IMR-90 (cell line): ENCODE measurements at regions of chr10 and their contacts with region 1.

Region 1: DNA sequence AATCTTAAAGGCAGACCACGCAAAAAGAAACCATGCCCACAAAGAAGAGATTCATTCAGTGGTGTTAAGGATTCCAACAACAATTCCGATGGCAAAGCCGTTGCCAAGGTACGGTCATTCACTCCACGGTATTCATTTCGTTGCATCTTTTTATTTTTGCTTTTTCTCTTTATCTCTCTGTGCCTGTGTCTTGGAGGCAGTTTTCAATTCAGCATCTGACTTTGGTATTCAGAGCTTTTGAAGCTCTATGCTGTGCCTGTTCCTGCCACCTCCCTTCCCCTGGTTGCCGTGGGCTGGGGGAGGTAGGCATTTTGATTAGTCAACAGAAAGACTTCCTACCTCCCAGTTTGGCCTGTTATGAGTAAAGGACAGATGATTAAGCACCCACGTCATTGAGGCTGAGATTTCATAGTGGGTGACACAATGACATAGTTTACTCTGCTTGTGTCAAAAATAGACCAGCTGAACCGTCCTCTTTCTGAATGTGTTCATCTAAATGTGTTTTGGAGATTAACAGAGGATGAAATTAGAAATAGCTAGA is 149.5 kb downstream of the ARID5B start:
- DNase-seq: peak; percentile 96
- ATAC-seq: peak; percentile 35
- H3K4me3 ChIP-seq: peak overlapping the region; percentile 62
- H3K27ac ChIP-seq: peak overlapping the region; percentile 83
- H3K4me1 ChIP-seq: peaks cover 22% of the 10 kb centered on the region
- H3K27me3 ChIP-seq: no peaks in the 10 kb centered on the region
- CTCF ChIP-seq: no peak
- POLR2A ChIP-seq: peak; percentile 94
- RAD21 ChIP-seq: no peak

Region 2: GRCh38 chr10:60495338-60496055 is 1555.5 kb before region 1 on chr10:
- CTCF ChIA-PET with region 1: no interaction called
- POLR2A ChIA-PET with region 1: interaction called, 14 read pairs
- dilution Hi-C with region 1: no loop called
- in situ Hi-C with region 1: no loop called
- intact Hi-C with region 1: no loop called
- DNase-seq: peak; percentile 28
- ATAC-seq: no peak
- H3K4me3 ChIP-seq: no peak overlapping the region
- H3K27ac ChIP-seq: no peak overlapping the region
- H3K4me1 ChIP-seq: no peaks in the 10 kb centered on the region
- H3K27me3 ChIP-seq: no peaks in the 10 kb centered on the region; the same call in 1 of the 2 replicates
- CTCF ChIP-seq: no peak
- POLR2A ChIP-seq: no peak
- RAD21 ChIP-seq: no peak

Region 3: DNA sequence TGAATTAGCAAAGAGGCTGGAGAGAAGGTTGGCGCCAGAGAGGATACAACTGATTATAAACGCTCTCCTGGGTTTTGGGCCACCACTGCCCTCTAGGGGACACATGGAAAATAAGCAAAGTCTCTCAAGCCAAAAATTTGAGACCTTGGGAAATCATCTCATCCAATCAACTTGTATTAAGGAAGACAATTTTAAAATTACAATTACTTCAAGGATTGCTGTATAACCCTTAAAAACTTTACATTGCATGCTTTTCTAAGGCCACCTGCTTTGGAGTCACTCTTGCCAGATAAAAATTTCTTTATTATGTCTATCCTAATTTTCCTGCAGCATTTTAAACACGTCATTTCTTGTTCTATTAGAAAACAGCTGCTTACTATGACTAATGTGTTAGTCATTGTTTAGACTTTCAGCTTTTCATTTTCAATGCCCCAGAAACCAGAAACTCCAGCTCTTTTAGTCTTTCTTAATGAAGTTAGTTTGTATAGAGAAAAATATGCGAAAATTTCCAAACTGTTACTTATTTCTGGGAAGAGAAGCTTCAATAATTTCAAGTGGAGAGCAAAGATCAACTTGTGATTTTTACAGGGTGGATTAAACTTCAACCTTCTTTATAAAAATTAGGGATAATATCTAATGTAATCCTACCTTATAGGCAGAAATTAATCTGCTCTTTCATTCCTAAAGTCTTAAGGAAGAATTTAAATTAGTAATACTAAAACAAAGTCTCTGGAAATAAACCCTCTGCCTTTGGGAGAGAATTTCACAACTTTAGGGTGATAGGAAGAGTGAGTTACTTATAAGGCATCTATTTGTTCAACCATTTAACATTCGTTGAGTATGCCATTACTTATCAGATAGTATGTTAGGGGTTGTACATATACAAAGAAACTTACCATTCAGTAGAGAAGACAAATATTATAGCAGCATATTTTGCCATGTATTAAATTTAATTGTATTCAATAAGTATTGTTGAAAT is 1086.4 kb before region 1 on chr10:
- CTCF ChIA-PET with region 1: no interaction called
- POLR2A ChIA-PET with region 1: no interaction called
- dilution Hi-C with region 1: no loop called
- in situ Hi-C with region 1: no loop called
- intact Hi-C with region 1: loop called (anchors 10 kb)
- DNase-seq: peak; percentile 91
- ATAC-seq: peak; percentile 76
- H3K4me3 ChIP-seq: no peak overlapping the region
- H3K27ac ChIP-seq: peak overlapping the region; percentile 49; the same call in 1 of the 2 replicates
- H3K4me1 ChIP-seq: peaks cover 4% of the 10 kb centered on the region; the same call in 1 of the 2 replicates
- H3K27me3 ChIP-seq: no peaks in the 10 kb centered on the region
- CTCF ChIP-seq: peak; percentile 88
- POLR2A ChIP-seq: no peak
- RAD21 ChIP-seq: peak; percentile 78

Region 4: DNA sequence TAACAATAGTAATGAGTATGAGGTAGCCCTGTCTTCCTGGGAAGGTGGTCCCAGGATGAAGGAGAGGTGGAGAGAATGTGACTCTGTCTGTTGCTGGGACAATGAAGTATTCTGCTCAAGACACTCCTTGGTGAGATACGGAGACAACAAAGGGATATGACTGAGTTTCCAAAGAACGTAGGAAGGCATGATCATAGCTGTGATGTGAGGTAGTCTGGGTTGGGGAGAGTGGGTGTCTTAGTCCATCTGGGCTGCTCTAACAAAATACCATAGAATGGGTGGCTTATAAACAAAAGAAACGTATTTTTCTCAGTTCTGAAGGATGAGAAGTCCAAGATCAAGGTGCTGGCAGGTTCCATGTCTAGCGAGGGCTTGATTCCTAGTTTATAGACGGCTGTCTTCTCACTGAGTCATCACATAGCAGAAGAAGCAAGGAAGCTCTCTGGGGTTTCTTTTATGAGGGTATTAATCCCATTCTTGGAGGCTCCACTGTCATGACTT is 1022.1 kb before region 1 on chr10:
- CTCF ChIA-PET with region 1: no interaction called
- POLR2A ChIA-PET with region 1: no interaction called
- dilution Hi-C with region 1: no loop called
- in situ Hi-C with region 1: no loop called
- intact Hi-C with region 1: no loop called
- DNase-seq: peak; percentile 77
- ATAC-seq: peak; percentile 85
- H3K4me3 ChIP-seq: no peak overlapping the region
- H3K27ac ChIP-seq: no peak overlapping the region
- H3K4me1 ChIP-seq: peaks cover 2% of the 10 kb centered on the region; the same call in 1 of the 2 replicates
- H3K27me3 ChIP-seq: no peaks in the 10 kb centered on the region
- CTCF ChIP-seq: no peak
- POLR2A ChIP-seq: no peak
- RAD21 ChIP-seq: no peak

Region 5: DNA sequence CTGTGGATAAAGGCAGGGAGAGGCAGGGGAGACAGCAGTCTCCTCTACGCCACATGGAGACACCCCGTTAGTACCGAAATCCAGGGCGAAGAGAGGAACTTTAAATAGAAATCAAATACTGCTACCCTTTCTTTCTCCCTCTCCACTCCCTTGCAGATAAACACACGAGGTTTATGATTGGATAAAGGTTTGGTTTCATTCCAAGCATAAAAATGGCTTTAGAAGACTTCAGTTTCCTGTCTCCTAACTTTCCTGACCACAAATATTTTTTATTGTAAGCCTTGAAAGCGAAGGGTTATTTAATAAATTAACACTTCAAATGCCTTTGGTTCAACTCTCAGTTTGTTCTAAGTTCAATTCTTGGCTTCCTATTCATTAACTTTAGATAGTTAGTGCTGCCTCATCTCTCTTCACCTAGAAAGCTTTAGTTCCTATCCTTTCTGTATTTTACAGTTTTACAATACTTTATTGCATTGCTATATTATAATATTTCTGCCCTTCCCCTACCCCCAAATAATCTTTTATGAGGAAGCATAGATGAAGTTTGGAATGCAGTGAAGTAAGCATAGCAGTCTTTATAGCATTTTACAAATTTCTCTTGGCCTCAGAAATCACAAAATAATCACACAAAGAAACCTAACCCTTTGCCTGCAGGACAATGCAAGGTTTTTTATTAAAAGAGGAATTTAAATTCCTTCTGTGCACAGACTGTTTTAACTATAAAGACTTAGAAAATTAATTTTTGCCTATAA is 181.0 kb before region 1 on chr10:
- CTCF ChIA-PET with region 1: no interaction called
- POLR2A ChIA-PET with region 1: no interaction called
- dilution Hi-C with region 1: no loop called
- in situ Hi-C with region 1: no loop called
- intact Hi-C with region 1: no loop called
- DNase-seq: peak; percentile 73
- ATAC-seq: peak; percentile 79
- H3K4me3 ChIP-seq: peak overlapping the region; percentile 29; the same call in 1 of the 2 replicates
- H3K27ac ChIP-seq: peak overlapping the region; percentile 98
- H3K4me1 ChIP-seq: peaks cover 17% of the 10 kb centered on the region
- H3K27me3 ChIP-seq: no peaks in the 10 kb centered on the region
- CTCF ChIP-seq: no peak
- POLR2A ChIP-seq: no peak
- RAD21 ChIP-seq: no peak

Region 6: GRCh38 chr10:61882621-61883373 is 168.2 kb before region 1 on chr10:
- CTCF ChIA-PET with region 1: no interaction called
- POLR2A ChIA-PET with region 1: no interaction called
- dilution Hi-C with region 1: no loop called
- in situ Hi-C with region 1: no loop called
- intact Hi-C with region 1: no loop called
- DNase-seq: peak; percentile 58
- ATAC-seq: no peak
- H3K4me3 ChIP-seq: no peak overlapping the region
- H3K27ac ChIP-seq: no peak overlapping the region
- H3K4me1 ChIP-seq: peaks cover under 1% of the 10 kb centered on the region; the same call in 1 of the 2 replicates
- H3K27me3 ChIP-seq: no peaks in the 10 kb centered on the region
- CTCF ChIP-seq: no peak
- POLR2A ChIP-seq: no peak
- RAD21 ChIP-seq: no peak

Region 7: DNA sequence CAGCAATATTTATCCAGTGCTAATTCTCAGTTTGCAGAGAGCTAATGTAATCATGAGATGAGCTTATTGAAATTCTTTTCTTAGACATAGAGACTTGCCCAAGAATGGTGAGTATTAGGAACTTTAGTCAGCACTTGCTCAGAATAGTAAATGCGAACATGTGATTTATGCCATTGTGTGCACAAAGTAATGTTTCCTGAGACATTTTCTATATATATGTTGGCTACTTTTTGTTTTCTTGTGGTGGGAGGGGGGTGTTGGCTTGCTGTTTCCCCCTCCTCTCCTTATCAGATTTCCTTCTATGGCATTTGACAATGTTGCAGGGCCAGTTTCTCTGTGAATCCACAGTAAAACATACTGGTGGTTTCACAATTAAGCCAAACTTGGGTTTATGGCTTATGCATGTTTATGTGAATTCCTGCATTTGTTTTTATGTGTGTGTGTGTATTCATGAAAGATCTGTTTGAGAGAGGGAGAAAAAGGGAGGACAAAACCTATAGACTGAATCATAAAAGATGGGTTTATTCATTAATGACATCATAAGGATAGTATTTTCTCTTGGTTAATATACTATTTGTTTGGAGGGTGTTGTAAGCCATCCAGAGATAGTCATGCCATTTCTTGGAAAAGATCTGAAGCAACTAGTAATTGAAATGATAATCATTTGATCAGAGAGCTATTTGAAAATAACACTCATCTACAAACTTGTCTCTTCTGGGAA is 113.2 kb before region 1 on chr10:
- CTCF ChIA-PET with region 1: no interaction called
- POLR2A ChIA-PET with region 1: interaction called, 4 read pairs
- dilution Hi-C with region 1: no loop called
- in situ Hi-C with region 1: no loop called
- intact Hi-C with region 1: loop called (anchors 2 kb)
- DNase-seq: peak; percentile 68
- ATAC-seq: peak; percentile 45
- H3K4me3 ChIP-seq: no peak overlapping the region
- H3K27ac ChIP-seq: peak overlapping the region; percentile 97; the same call in 1 of the 2 replicates
- H3K4me1 ChIP-seq: peaks cover 18% of the 10 kb centered on the region
- H3K27me3 ChIP-seq: no peaks in the 10 kb centered on the region
- CTCF ChIP-seq: no peak
- POLR2A ChIP-seq: no peak
- RAD21 ChIP-seq: no peak

Region 8: DNA sequence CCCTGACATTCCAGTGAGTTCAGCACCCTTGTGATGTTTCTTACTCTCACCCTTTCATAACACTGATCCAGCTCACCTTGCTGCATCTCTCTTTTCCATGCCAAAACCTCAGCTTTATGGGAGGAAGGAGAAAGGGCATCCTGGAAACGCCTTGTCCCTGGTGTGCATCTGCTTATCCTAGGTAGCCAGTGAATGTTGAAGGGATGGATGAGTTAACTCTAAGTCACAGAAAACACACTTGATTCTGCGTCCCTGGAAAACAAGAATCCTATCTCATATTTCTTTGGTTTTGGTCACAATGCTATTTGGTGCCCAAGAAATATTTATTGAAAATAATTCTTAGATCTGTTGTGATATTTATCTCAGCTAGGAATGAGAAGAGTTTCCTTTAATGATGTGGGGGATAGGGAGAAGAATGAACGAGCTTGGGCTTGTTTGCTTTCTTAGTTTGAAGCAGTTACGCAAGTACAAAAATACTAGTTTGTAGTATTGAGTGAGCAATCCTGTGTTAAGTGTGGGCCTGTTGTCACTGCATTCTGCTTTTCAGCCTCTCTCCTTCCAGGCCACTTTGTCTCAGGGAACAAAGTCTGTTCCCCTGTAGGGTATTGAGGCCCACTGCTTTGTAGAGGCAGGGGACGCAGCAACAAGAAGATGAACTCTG is 23.0 kb before region 1 on chr10:
- CTCF ChIA-PET with region 1: no interaction called
- POLR2A ChIA-PET with region 1: interaction called, 18 read pairs
- dilution Hi-C with region 1: no loop called
- in situ Hi-C with region 1: no loop called
- intact Hi-C with region 1: no loop called
- DNase-seq: peak; percentile 57
- ATAC-seq: peak; percentile 68
- H3K4me3 ChIP-seq: no peak overlapping the region
- H3K27ac ChIP-seq: peak overlapping the region; percentile 87
- H3K4me1 ChIP-seq: peaks cover 22% of the 10 kb centered on the region
- H3K27me3 ChIP-seq: no peaks in the 10 kb centered on the region
- CTCF ChIP-seq: no peak
- POLR2A ChIP-seq: no peak
- RAD21 ChIP-seq: no peak

Region 9: DNA sequence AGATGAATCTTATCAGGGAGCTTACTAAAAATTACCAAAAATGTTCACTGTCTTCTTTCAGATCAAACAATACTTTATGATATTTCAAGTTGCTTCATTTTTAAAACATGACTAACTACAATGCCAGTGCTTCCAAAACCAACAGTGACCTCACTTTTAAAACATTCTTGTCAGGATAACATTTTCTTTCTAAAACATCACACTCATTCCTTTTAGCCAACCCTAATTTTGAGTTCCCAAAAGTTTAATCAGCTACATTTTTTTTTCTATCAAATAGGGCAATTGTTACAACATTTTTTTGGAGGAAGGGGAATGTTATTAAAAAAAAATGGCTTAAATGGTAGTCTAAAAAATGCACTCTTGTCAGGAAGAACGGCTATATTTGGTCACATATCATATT is 180.4 kb after region 1 on chr10:
- CTCF ChIA-PET with region 1: interaction called, 3 read pairs
- POLR2A ChIA-PET with region 1: interaction called, 11 read pairs
- dilution Hi-C with region 1: no loop called
- in situ Hi-C with region 1: no loop called
- intact Hi-C with region 1: no loop called
- DNase-seq: peak; percentile 92
- ATAC-seq: peak; percentile 56
- H3K4me3 ChIP-seq: no peak overlapping the region
- H3K27ac ChIP-seq: peak overlapping the region; percentile 100; the same call in 1 of the 2 replicates
- H3K4me1 ChIP-seq: peaks cover 20% of the 10 kb centered on the region
- H3K27me3 ChIP-seq: no peaks in the 10 kb centered on the region
- CTCF ChIP-seq: no peak
- POLR2A ChIP-seq: no peak
- RAD21 ChIP-seq: no peak

Region 10: GRCh38 chr10:62804356-62805230 is 753.6 kb after region 1 on chr10 and contains the start of gene ADO:
- CTCF ChIA-PET with region 1: no interaction called
- POLR2A ChIA-PET with region 1: no interaction called
- dilution Hi-C with region 1: no loop called
- in situ Hi-C with region 1: loop called (anchors 25 kb)
- intact Hi-C with region 1: loop called (anchors 10 kb)
- DNase-seq: peak; percentile 79
- ATAC-seq: peak; percentile 91
- H3K4me3 ChIP-seq: peak within 1 kb of the TSS; percentile 94
- H3K27ac ChIP-seq: peak within 1 kb of the TSS; percentile 99
- H3K4me1 ChIP-seq: peaks cover 8% of the 10 kb centered on the region; the same call in 1 of the 2 replicates
- H3K27me3 ChIP-seq: no peaks in the 10 kb centered on the region; the same call in 1 of the 2 replicates
- CTCF ChIP-seq: no peak
- POLR2A ChIP-seq: peak; percentile 62
- RAD21 ChIP-seq: no peak
- total RNA-seq, gene ADO: 8.1 and 11.4 TPM in 2 replicates